ENCODE measurements at regions of chr9 and their contacts with region 1.

Region 1: DNA sequence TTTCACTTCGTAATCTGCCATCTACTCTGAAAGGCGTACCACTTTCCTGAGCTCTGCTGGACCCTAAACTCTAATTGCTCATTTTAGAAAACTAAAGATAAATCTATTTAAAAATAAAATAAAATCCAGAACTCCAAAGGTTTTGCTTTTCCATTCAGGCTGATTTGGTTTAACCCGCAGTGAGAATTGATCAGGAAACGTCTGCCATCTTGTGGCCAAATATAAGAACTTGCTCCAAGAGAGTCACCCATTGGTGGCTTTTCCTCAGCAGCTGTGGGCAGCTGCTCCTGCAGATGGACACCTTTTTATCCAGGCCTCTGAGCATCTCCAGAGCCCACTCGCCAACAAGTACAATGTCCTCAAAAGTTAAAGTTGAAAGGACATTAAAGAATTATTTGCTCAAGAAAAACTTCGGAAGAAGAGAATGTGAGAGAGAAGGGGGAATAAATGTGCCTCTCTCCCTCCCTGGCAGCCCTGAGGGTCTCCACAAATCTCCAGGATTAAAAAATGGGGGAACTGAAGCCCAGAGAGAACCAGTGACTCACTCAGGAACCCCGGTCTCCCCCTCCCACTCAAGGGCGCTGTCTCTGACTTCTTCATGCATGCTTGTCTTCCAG is 4.1 kb downstream of the SAXO1 start:
- DNase-seq: peak in 4 of 5 donors; percentile 53 to 91 (median 74)
- H3K4me3 ChIP-seq: no peak overlapping the region
- H3K27ac ChIP-seq: no peak overlapping the region
- H3K4me1 ChIP-seq: peaks cover 0 to 3% (median 0%) of the 10 kb centered on the region in 3 donors
- H3K27me3 ChIP-seq: no peaks in the 10 kb centered on the region
- CTCF ChIP-seq: peak; percentile 73

Region 2: GRCh38 chr9:18255158-18255629 is 773.7 kb before region 1 on chr9:
- intact Hi-C with region 1: loop called (anchors 10 kb)
- DNase-seq: peak; percentile 84 to 95 (median 89)
- H3K4me3 ChIP-seq: no peak overlapping the region
- H3K27ac ChIP-seq: no peak overlapping the region
- H3K4me1 ChIP-seq: no peaks in the 10 kb centered on the region
- H3K27me3 ChIP-seq: no peaks in the 10 kb centered on the region
- CTCF ChIP-seq: peak; percentile 95